Heart left ventricle (tissue), 16 donors: ENCODE measurements at regions of chr12 and their contacts with region 1.

Region 1: DNA sequence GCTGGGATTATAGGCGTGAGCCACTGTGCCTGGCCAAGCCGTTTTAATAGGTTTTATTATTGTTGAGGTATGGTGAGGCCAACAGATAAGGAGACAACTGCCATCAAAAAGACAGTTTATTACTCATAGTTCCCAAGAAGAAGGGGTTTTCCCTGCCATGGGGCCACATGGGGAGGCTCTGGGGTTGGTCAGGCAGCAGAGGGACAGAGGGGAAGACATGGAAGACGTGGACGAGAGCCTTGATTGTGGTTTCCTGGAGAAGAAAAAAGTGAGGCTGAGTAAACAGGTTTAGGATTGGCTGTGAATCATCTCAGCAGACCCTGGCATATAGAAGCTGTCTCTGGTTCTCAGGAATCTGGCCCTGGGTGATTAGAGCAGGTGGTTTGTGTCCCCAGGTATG is 69.9 kb downstream of the FOXN4 start:
- DNase-seq: no peak
- ATAC-seq: no peak
- H3K4me3 ChIP-seq: no peak overlapping the region
- H3K27ac ChIP-seq: no peak overlapping the region
- H3K4me1 ChIP-seq: no peaks in the 10 kb centered on the region
- H3K27me3 ChIP-seq: no peaks in the 10 kb centered on the region
- CTCF ChIP-seq: no peak
- POLR2A ChIP-seq: no peak

Region 2: GRCh38 chr12:109182041-109182839 is 56.9 kb before region 1 on chr12:
- intact Hi-C with region 1: loop called in 1 of 10 experiments (anchors 10 kb)
- DNase-seq: no peak
- ATAC-seq: no peak
- H3K4me3 ChIP-seq: no peak overlapping the region
- H3K27ac ChIP-seq: peak overlapping the region in 1 of 12 donors; percentile 14
- H3K4me1 ChIP-seq: no peaks in the 10 kb centered on the region
- H3K27me3 ChIP-seq: no peaks in the 10 kb centered on the region
- CTCF ChIP-seq: no peak
- POLR2A ChIP-seq: no peak

Region 3: GRCh38 chr12:109209082-109209481 is 30.1 kb before region 1 on chr12:
- intact Hi-C with region 1: loop called in 1 of 10 experiments (anchors 5 kb)
- DNase-seq: no peak
- ATAC-seq: peak in 2 of 4 donors; percentile 6 to 19
- H3K4me3 ChIP-seq: no peak overlapping the region
- H3K27ac ChIP-seq: no peak overlapping the region
- H3K4me1 ChIP-seq: no peaks in the 10 kb centered on the region
- H3K27me3 ChIP-seq: no peaks in the 10 kb centered on the region
- CTCF ChIP-seq: no peak
- POLR2A ChIP-seq: no peak